Naive thymus-derived CD4-positive, alpha-beta T cell (primary cell): ENCODE measurements at regions of chr10 and their contacts with region 1.

Region 1: GRCh38 chr10:71850637-71851464 is at the start of gene PSAP:
- DNase-seq: peak; percentile 96 to 99 (median 97)
- ATAC-seq: peak; percentile 98
- H3K4me3 ChIP-seq: peak within 1 kb of the TSS; percentile 92
- H3K4me3 Mint-ChIP-seq: peak within 1 kb of the TSS; percentile 91 to 99 (median 96)
- H3K27ac ChIP-seq: peak within 1 kb of the TSS; percentile 79
- H3K27ac Mint-ChIP-seq: peak within 1 kb of the TSS; percentile 79 to 96 (median 86)
- H3K4me1 ChIP-seq: peaks cover 7 to 14% of the 10 kb centered on the region in 2 donors
- H3K4me1 Mint-ChIP-seq: peaks cover 34 to 51% (median 48%) of the 10 kb centered on the region in 7 donors
- H3K27me3 ChIP-seq: no peaks in the 10 kb centered on the region
- H3K27me3 Mint-ChIP-seq: no peaks in the 10 kb centered on the region
- total RNA-seq, gene PSAP: 153 to 1,163 (median 266) TPM

Region 2: GRCh38 chr10:71696628-71697326 is 154.1 kb before region 1 on chr10:
- CTCF ChIA-PET with region 1: no interaction called
- POLR2A ChIA-PET with region 1: no interaction called
- intact Hi-C with region 1: loop called in 1 of 2 experiments (anchors 1 kb)
- DNase-seq: peak; percentile 36 to 71 (median 54)
- ATAC-seq: peak; percentile 70
- H3K4me3 ChIP-seq: no peak overlapping the region
- H3K4me3 Mint-ChIP-seq: peak overlapping the region in 2 of 10 donors; percentile 16 to 48
- H3K27ac ChIP-seq: no peak overlapping the region
- H3K27ac Mint-ChIP-seq: peak overlapping the region in 1 of 9 donors; percentile 38
- H3K4me1 ChIP-seq: peaks cover 23 to 50% of the 10 kb centered on the region in 2 donors
- H3K4me1 Mint-ChIP-seq: peaks cover 6 to 41% (median 25%) of the 10 kb centered on the region in 7 donors
- H3K27me3 ChIP-seq: no peaks in the 10 kb centered on the region
- H3K27me3 Mint-ChIP-seq: no peaks in the 10 kb centered on the region

Region 3: GRCh38 chr10:71835671-71836595 is 14.9 kb before region 1 on chr10:
- CTCF ChIA-PET with region 1: interaction called, 6 read pairs
- POLR2A ChIA-PET with region 1: interaction called, 10 read pairs
- intact Hi-C with region 1: loop called (anchors 1 to 2 kb)
- DNase-seq: no peak
- ATAC-seq: peak; percentile 70
- H3K4me3 ChIP-seq: no peak overlapping the region
- H3K4me3 Mint-ChIP-seq: no peak overlapping the region
- H3K27ac ChIP-seq: no peak overlapping the region
- H3K27ac Mint-ChIP-seq: peak overlapping the region in 5 of 9 donors; percentile 22 to 78 (median 32)
- H3K4me1 ChIP-seq: peaks cover 5 to 12% of the 10 kb centered on the region in 2 donors
- H3K4me1 Mint-ChIP-seq: peaks cover 41 to 72% (median 56%) of the 10 kb centered on the region in 7 donors
- H3K27me3 ChIP-seq: no peaks in the 10 kb centered on the region
- H3K27me3 Mint-ChIP-seq: no peaks in the 10 kb centered on the region

Region 4: GRCh38 chr10:71985542-71986250 is 134.8 kb after region 1 on chr10:
- CTCF ChIA-PET with region 1: no interaction called
- POLR2A ChIA-PET with region 1: no interaction called
- intact Hi-C with region 1: no loop called
- DNase-seq: no peak
- ATAC-seq: peak; percentile 50
- H3K4me3 ChIP-seq: no peak overlapping the region
- H3K4me3 Mint-ChIP-seq: no peak overlapping the region
- H3K27ac ChIP-seq: no peak overlapping the region
- H3K27ac Mint-ChIP-seq: peak overlapping the region in 1 of 9 donors; percentile 11
- H3K4me1 ChIP-seq: no peaks in the 10 kb centered on the region
- H3K4me1 Mint-ChIP-seq: peaks cover 0 to 13% (median 0%) of the 10 kb centered on the region in 7 donors
- H3K27me3 ChIP-seq: no peaks in the 10 kb centered on the region
- H3K27me3 Mint-ChIP-seq: peaks cover 0 to 8% (median 0%) of the 10 kb centered on the region in 5 donors

Region 5: DNA sequence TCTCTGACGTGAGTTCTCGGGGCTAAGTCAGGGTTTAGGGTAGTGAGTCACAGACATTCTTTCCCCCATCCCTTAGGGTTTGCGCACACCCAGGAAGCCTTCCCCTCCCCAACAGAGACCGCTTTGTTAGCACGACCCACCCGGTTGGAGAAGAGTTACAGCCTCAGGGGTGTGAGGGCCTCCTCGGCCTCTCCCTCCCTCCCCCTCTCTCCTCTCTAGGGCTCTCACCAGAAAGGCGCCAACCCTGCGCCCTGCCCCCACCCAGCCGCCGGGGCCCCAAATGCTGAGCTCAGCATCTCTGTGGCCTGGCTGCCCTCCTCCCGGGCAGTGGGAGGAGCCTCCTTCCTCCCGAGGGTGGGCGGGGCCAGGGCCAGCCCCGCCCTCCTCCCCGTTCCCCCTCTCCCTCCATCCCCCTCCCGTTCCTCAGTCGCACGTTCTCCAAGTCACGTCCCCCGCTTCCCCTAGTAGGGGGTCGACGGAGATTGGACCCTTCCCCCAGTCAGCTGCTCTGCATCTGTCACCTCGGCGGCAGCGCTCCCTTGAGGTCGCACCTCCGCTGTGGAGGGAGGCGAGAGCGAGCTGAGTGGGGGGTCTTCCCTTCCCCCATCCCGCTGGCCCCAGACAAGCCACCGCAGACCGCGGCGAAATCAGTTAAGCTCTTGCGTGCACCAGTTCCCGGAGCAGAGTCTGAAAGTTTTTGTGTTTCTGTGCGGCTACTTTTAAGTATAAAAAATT is 409.9 kb after region 1 on chr10:
- CTCF ChIA-PET with region 1: no interaction called
- POLR2A ChIA-PET with region 1: no interaction called
- intact Hi-C with region 1: loop called in 1 of 2 experiments (anchors 5 kb)
- DNase-seq: peak; percentile 55 to 89 (median 63)
- ATAC-seq: peak; percentile 85
- H3K4me3 ChIP-seq: peak overlapping the region; percentile 68
- H3K4me3 Mint-ChIP-seq: peak overlapping the region; percentile 83 to 93 (median 90)
- H3K27ac ChIP-seq: peak overlapping the region; percentile 78
- H3K27ac Mint-ChIP-seq: peak overlapping the region; percentile 87 to 97 (median 94)
- H3K4me1 ChIP-seq: peaks cover 45 to 63% of the 10 kb centered on the region in 2 donors
- H3K4me1 Mint-ChIP-seq: peaks cover 32 to 83% (median 67%) of the 10 kb centered on the region in 7 donors
- H3K27me3 ChIP-seq: no peaks in the 10 kb centered on the region
- H3K27me3 Mint-ChIP-seq: no peaks in the 10 kb centered on the region

Region 6: GRCh38 chr10:72692057-72692910 is 841.4 kb after region 1 on chr10 and contains the start of gene MCU:
- CTCF ChIA-PET with region 1: no interaction called
- POLR2A ChIA-PET with region 1: no interaction called
- intact Hi-C with region 1: loop called in 1 of 2 experiments (anchors 2 kb)
- DNase-seq: peak; percentile 85 to 94 (median 91)
- ATAC-seq: peak; percentile 98
- H3K4me3 ChIP-seq: peak within 1 kb of the TSS; percentile 86
- H3K4me3 Mint-ChIP-seq: peak within 1 kb of the TSS; percentile 84 to 93 (median 91)
- H3K27ac ChIP-seq: peak within 1 kb of the TSS; percentile 68
- H3K27ac Mint-ChIP-seq: peak within 1 kb of the TSS; percentile 5 to 93 (median 76)
- H3K4me1 ChIP-seq: peaks cover 11 to 12% of the 10 kb centered on the region in 2 donors
- H3K4me1 Mint-ChIP-seq: peaks cover 9 to 39% (median 32%) of the 10 kb centered on the region in 7 donors
- H3K27me3 ChIP-seq: no peaks in the 10 kb centered on the region
- H3K27me3 Mint-ChIP-seq: peaks cover 0 to 6% (median 0%) of the 10 kb centered on the region in 5 donors
- total RNA-seq, gene MCU: 7.7 to 14.3 (median 12.7) TPM